Heart left ventricle (tissue), 16 donors: ENCODE measurements at regions of chr17 and their contacts with region 1.

Region 1: GRCh38 chr17:66673668-66674315 is 161.1 kb upstream of the CACNG5 start:
- DNase-seq: peak in 3 of 5 donors; percentile 31 to 36 (median 32)
- ATAC-seq: peak; percentile 35 to 81 (median 76)
- H3K4me3 ChIP-seq: no peak overlapping the region
- H3K27ac ChIP-seq: peak overlapping the region in 1 of 12 donors; percentile 40
- H3K4me1 ChIP-seq: peaks cover 0 to 12% (median 0%) of the 10 kb centered on the region in 12 donors
- H3K27me3 ChIP-seq: no peaks in the 10 kb centered on the region
- CTCF ChIP-seq: peak; percentile 45 to 71 (median 66)
- POLR2A ChIP-seq: no peak

Region 2: DNA sequence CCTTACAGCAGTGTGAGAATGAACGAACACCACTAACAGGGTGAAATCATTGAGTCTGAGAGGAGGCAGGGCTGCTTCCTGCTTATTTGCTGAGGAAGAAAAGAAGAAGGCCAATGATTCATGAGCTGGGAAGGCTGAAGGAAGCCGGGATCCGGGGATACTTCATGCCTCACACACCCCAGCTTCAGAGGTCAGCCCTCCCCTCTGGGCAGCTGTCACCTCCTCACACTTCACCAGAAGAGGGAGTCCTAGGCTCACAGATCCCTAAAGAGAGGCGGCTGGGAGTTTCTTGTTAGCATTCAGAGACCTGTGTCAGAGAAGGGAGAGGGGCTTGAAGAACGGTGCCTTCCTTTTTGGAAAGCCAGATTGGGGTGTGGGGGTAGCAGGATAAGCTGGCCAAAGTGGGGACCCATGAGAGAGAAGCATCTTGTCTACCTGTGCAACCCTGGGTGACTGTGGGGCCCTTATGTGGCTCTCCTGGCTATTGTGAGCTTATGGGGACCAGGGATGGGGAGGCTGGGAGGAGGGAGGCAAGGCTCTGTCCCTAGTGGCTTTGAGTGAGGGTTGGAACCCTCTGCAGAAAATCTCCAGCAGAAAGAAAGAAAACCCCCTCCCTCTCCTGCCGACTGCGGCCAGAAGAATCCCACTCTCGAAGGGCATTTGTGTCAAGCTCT is 1442.0 kb before region 1 on chr17:
- intact Hi-C with region 1: loop called in 2 of 10 experiments (anchors 5 to 10 kb)
- DNase-seq: peak in 3 of 5 donors; percentile 19 to 37 (median 29)
- ATAC-seq: peak; percentile 61 to 88 (median 80)
- H3K4me3 ChIP-seq: no peak overlapping the region
- H3K27ac ChIP-seq: no peak overlapping the region
- H3K4me1 ChIP-seq: peaks cover 0 to 14% (median 0%) of the 10 kb centered on the region in 12 donors
- H3K27me3 ChIP-seq: peaks cover 0 to 23% (median 0%) of the 10 kb centered on the region in 9 donors
- CTCF ChIP-seq: peak; percentile 27 to 69 (median 54)
- POLR2A ChIP-seq: no peak

Region 3: GRCh38 chr17:66200685-66201092 is 473.1 kb before region 1 on chr17:
- intact Hi-C with region 1: loop called in 5 of 10 experiments (anchors 2 to 5 kb)
- DNase-seq: peak in 3 of 5 donors; percentile 14 to 42 (median 36)
- ATAC-seq: peak in 2 of 4 donors; percentile 18 to 46
- H3K4me3 ChIP-seq: no peak overlapping the region
- H3K27ac ChIP-seq: no peak overlapping the region
- H3K4me1 ChIP-seq: no peaks in the 10 kb centered on the region
- H3K27me3 ChIP-seq: no peaks in the 10 kb centered on the region
- CTCF ChIP-seq: peak; percentile 32 to 63 (median 46)
- POLR2A ChIP-seq: no peak

Region 4: DNA sequence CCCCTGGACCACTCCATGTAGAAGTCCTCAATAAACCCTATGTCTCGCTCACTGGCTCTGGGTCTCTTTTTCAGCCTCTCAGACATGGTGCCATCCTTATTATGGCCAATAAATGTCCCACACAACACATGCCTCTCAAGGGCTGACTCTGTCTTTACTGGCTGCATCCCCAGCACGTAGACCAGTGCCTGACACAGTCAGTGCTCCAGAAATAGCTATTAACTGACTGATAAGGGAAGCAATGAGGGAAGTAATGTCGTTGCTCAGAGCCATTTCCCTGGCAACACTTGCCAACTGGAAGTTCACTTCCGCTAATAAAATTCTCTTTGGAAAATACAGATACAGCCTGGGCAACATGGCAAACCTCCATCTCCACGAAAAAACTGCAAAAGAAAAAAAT is 425.5 kb before region 1 on chr17:
- intact Hi-C with region 1: loop called in 1 of 10 experiments (anchors 5 kb)
- DNase-seq: peak in 2 of 5 donors; percentile 35 to 48
- ATAC-seq: peak; percentile 73 to 95 (median 90)
- H3K4me3 ChIP-seq: no peak overlapping the region
- H3K27ac ChIP-seq: peak overlapping the region in 1 of 12 donors; percentile 22
- H3K4me1 ChIP-seq: peaks cover 0 to 6% (median 0%) of the 10 kb centered on the region in 12 donors
- H3K27me3 ChIP-seq: no peaks in the 10 kb centered on the region
- CTCF ChIP-seq: no peak
- POLR2A ChIP-seq: no peak

Region 5: DNA sequence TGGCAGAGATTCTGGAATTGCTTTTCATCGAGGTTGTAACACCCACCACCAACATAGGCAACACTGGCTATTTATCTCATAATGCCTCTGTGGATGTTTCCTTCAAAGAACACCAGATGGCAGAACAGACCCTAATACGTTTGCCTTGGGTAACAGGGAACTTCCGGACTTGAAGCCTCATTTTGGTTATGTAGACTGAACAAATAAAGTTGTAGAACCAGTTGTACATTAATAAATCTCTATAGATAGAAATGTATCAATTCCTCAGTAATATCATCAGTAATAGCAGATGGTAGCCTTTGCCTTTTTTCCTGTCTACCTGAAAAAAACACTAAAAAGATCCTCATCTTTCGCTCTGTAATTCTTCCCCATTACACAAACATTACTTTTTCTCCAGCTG is 418.7 kb before region 1 on chr17:
- intact Hi-C with region 1: loop called (anchors 1 to 5 kb)
- DNase-seq: peak in 1 of 5 donors; percentile 11
- ATAC-seq: peak in 3 of 4 donors; percentile 79 to 85 (median 80)
- H3K4me3 ChIP-seq: no peak overlapping the region
- H3K27ac ChIP-seq: no peak overlapping the region
- H3K4me1 ChIP-seq: no peaks in the 10 kb centered on the region
- H3K27me3 ChIP-seq: no peaks in the 10 kb centered on the region
- CTCF ChIP-seq: peak; percentile 39 to 83 (median 70)
- POLR2A ChIP-seq: no peak

Region 6: GRCh38 chr17:66567234-66568170 is 106.3 kb before region 1 on chr17:
- intact Hi-C with region 1: loop called in 2 of 10 experiments (anchors 10 kb)
- DNase-seq: peak; percentile 69 to 86 (median 70)
- ATAC-seq: peak; percentile 61 to 86 (median 82)
- H3K4me3 ChIP-seq: no peak overlapping the region
- H3K27ac ChIP-seq: no peak overlapping the region
- H3K4me1 ChIP-seq: peaks cover 0 to 8% (median 0%) of the 10 kb centered on the region in 12 donors
- H3K27me3 ChIP-seq: no peaks in the 10 kb centered on the region
- CTCF ChIP-seq: peak; percentile 64 to 81 (median 75)
- POLR2A ChIP-seq: no peak

Region 7: DNA sequence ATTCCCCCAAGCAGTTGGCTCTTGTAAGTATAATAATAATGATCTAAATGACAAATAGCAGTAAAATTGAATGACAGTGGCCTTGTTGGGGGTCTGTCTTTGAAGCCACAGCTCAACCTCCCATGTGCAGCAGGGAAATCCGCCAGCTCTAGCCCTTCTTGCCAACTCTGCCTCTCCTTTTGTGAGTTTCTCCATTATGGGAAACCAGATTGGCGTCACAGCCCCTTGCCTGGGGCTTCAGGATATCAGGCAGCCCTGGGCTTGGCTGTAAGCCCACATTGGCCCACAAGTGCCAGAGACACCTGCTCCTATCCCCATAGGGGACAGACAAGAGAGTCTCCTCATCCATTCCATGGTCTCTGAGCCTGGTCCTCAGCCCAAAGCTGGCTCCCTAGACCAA is 90.8 kb after region 1 on chr17:
- intact Hi-C with region 1: no loop called
- DNase-seq: no peak
- ATAC-seq: no peak
- H3K4me3 ChIP-seq: no peak overlapping the region
- H3K27ac ChIP-seq: no peak overlapping the region
- H3K4me1 ChIP-seq: no peaks in the 10 kb centered on the region
- H3K27me3 ChIP-seq: no peaks in the 10 kb centered on the region
- CTCF ChIP-seq: no peak
- POLR2A ChIP-seq: no peak